ENCODE measurements at regions of chr11 and their contacts with region 1.

Region 1: DNA sequence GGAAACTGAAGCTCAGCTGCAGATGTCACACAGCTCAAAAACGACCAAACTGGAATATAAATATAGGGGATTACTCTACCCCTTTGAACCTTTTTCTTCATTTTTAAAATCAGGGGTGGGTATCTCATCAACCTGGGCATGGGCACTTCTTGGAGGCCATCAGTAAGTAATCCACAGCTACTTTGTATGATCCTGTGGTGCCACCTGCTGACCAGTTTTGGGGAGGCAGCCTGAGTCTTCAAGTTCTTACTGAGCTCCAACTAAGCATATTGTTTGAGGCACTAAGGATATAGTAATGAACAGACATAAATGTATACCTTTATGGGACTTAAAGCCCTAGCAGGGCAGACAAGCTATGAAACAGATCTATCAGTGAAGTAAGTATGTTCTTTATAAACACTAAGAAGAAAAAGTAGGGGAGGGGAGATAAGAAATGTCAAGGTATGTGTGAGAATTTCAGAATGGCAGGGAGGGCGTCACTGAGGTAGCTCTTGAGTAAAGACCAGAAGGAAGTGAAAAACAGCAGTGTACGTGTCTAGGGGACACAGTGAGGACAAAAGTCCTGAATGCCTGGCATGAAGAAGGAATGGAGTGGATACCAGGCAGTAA is 18.4 kb downstream of the TUB start:
- DNase-seq: peak in 1 of 2 donors; percentile 83
- ATAC-seq: peak; percentile 80

Region 2: DNA sequence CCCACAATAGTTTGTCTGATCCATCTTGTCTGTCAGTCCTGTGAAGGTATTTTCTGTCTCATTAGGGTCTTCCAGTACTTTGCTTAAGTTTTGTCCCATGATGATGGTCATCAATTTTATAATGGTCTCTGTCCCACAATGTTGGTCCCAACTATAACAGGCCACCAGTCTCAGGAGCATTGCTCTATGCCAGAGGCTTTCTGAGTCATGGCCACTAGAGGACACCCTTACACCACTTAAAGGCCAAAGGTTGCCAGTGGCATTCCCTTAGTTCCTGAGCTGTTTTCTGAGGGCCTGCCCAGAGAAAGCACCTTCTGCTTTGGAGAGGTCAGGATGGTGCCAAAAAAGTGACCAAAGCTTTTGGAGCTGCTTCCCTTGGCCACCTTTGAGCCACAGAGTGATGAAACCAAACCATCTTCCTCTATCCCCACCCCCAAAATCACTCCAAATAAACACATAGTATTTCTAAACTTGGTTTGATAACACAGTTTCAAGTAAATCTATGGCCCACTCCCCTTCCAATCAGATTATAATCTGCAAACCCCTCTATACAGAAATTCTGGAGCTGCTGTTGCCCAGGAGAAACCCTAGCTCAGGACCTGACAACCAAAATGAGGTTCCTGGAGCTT is 92.9 kb before region 1 on chr11:
- intact Hi-C with region 1: loop called in 1 of 2 experiments (anchors 5 kb)
- DNase-seq: peak in 1 of 2 donors; percentile 45
- ATAC-seq: peak; percentile 95

Region 3: GRCh38 chr11:8033305-8034105 is 65.9 kb before region 1 on chr11:
- intact Hi-C with region 1: loop called in 1 of 2 experiments (anchors 10 kb)
- DNase-seq: peak; percentile 68 to 71
- ATAC-seq: peak; percentile 85

Measured in left colon (tissue), 2 donors.